ENCODE measurements at regions of chr7 and their contacts with region 1.

Region 1: GRCh38 chr7:119197877-119198527 is 973.5 kb downstream of the ANKRD7 start:
- DNase-seq: peak; percentile 50
- H3K4me3 ChIP-seq: no peak overlapping the region
- H3K27ac ChIP-seq: no peak overlapping the region
- H3K4me1 ChIP-seq: peaks cover 7% of the 10 kb centered on the region
- H3K27me3 ChIP-seq: peaks cover 2% of the 10 kb centered on the region
- CTCF ChIP-seq: peak; percentile 81 to 87

Region 2: DNA sequence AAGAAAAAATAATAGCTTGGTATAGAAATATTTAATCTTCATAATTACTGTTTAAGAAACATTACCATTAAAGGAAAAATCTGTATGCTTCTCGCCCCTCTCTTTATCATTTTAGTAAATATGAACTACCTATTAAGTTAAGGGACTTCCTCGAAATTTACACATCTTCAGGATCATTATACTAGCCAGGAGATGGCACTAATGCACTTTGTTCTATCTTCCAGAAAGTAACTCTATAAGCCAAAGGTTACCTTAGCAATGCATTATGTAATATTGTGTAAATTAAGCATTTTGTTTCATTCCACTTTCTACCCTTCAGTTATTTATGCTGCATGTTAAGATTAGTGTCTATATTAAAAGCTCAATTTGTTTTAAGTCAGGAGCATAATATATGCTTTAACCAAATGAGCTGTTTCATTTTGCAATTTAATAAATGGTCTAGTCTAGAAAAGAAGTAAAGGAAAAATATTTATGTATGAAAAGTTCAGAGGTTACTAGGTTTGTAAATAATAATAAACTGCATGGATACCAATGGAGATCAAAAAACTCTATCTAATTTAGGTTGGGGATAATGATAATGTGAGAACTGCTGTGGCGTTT is 845.0 kb before region 1 on chr7:
- CTCF ChIA-PET with region 1: no interaction called
- dilution Hi-C with region 1: no loop called
- in situ Hi-C with region 1: loop called in 1 of 2 experiments (anchors 25 kb)
- intact Hi-C with region 1: loop called (anchors 5 kb)
- DNase-seq: peak; percentile 10
- H3K4me3 ChIP-seq: no peak overlapping the region
- H3K27ac ChIP-seq: no peak overlapping the region
- H3K4me1 ChIP-seq: no peaks in the 10 kb centered on the region
- H3K27me3 ChIP-seq: no peaks in the 10 kb centered on the region
- CTCF ChIP-seq: peak; percentile 31 to 54

Region 3: GRCh38 chr7:118870187-118870586 is 327.8 kb before region 1 on chr7:
- CTCF ChIA-PET with region 1: no interaction called
- dilution Hi-C with region 1: no loop called
- in situ Hi-C with region 1: no loop called
- intact Hi-C with region 1: loop called (anchors 1 kb)
- DNase-seq: peak; percentile 32
- H3K4me3 ChIP-seq: no peak overlapping the region
- H3K27ac ChIP-seq: no peak overlapping the region
- H3K4me1 ChIP-seq: peaks cover 10% of the 10 kb centered on the region
- H3K27me3 ChIP-seq: no peaks in the 10 kb centered on the region
- CTCF ChIP-seq: peak; percentile 62 to 71

Region 4: DNA sequence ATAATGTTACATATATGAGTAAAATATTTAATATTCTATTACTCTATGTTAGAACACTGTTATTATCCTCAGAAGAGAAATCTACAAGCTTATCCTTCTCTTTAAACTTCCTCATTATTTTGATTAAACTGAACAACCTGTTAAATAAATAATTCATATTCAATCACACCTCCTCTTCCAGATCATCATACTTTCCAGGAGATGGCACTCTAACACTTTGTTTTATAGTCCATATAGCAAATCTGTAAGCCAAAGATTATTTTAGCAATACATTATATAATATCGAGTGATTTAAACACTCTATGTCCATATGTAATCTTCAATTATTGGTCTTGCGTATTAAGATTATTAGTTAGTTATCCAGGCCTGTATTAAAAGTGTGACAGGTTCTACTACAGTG is 279.4 kb before region 1 on chr7:
- CTCF ChIA-PET with region 1: interaction called, 5 read pairs
- dilution Hi-C with region 1: no loop called
- in situ Hi-C with region 1: loop called (anchors 10 to 25 kb)
- intact Hi-C with region 1: loop called (anchors 1 kb)
- DNase-seq: peak; percentile 4
- H3K4me3 ChIP-seq: no peak overlapping the region
- H3K27ac ChIP-seq: no peak overlapping the region
- H3K4me1 ChIP-seq: no peaks in the 10 kb centered on the region
- H3K27me3 ChIP-seq: peaks cover 5% of the 10 kb centered on the region
- CTCF ChIP-seq: peak; percentile 48 to 52

Region 5: DNA sequence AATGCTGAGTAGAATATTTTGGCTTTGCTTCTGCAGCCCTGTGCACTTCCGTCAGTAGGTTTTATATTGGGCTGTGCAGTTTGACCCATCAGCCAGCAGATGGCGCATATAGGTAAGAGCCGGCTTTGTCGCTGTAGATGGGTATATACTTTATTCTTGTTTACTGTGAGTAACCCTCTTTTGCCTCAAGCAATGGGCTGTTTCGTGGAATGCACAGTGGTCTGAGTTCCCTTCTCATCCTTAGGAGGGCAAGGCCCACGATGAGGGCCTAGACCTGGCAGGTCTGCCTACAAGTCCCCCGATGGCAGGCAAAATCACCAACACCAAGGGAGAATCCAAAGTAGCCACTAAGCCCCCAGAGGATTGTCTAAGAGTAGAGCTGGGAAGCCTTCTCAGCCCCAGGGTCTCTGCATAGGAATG is 72.1 kb after region 1 on chr7:
- CTCF ChIA-PET with region 1: no interaction called
- dilution Hi-C with region 1: no loop called
- in situ Hi-C with region 1: no loop called
- intact Hi-C with region 1: no loop called
- DNase-seq: peak; percentile 50
- H3K4me3 ChIP-seq: no peak overlapping the region
- H3K27ac ChIP-seq: no peak overlapping the region
- H3K4me1 ChIP-seq: peaks cover 6% of the 10 kb centered on the region
- H3K27me3 ChIP-seq: no peaks in the 10 kb centered on the region
- CTCF ChIP-seq: peak; percentile 91

Region 6: GRCh38 chr7:120645966-120646365 is 1448.0 kb after region 1 on chr7:
- CTCF ChIA-PET with region 1: interaction called, 10 read pairs
- dilution Hi-C with region 1: no loop called
- in situ Hi-C with region 1: no loop called
- intact Hi-C with region 1: no loop called
- DNase-seq: no peak
- H3K4me3 ChIP-seq: no peak overlapping the region
- H3K27ac ChIP-seq: no peak overlapping the region
- H3K4me1 ChIP-seq: no peaks in the 10 kb centered on the region
- H3K27me3 ChIP-seq: no peaks in the 10 kb centered on the region
- CTCF ChIP-seq: no peak

Measured in mammary epithelial cell (primary cell).